Tibial artery (tissue), 4 donors: ENCODE measurements at regions of chr10 and their contacts with region 1.

Region 1: DNA sequence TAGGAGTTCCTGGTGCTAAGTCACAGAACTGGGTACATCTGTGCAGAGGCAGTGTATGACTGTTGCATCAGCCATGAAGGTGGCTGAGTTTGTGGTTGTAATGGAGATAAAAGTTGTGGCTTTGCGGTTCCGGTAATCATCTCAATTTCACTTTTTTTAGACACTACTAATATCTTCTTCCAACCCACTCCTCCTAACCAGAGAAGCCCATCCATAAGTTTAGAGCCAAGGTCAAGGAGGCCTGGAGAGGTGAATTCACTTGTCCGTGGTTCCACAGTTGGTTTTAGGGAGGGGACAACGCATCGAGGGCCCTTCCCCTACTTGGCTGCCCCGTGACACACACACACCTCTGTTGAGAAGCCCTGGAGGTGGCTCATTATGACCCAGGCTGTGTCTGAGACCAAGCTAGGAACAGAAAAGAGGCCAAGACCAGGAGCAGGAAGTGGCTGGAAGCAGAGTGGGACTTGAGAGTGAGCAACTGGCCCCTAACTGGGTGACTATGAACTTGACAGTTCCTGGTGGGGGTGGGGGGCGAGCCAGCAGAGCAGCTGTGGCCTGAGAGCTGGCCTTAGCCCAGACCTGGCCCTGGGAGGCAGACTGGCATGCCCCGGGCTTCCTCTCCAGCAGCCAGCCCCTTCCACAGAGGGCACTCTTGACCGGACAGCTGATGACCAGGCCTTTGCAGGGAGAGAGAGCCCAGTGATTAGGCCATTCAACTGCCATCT is 66.7 kb upstream of the COL13A1 start:
- DNase-seq: no peak
- H3K4me3 ChIP-seq: no peak overlapping the region
- H3K27ac ChIP-seq: peak overlapping the region; percentile 61 to 91
- H3K4me1 ChIP-seq: peaks cover 0 to 93% (median 80%) of the 10 kb centered on the region in 4 donors
- H3K27me3 ChIP-seq: no peaks in the 10 kb centered on the region
- CTCF ChIP-seq: no peak

Region 2: GRCh38 chr10:69800109-69800508 is 65.2 kb after region 1 on chr10:
- intact Hi-C with region 1: loop called (anchors 5 kb)
- DNase-seq: peak in 1 of 2 donors; percentile 74
- H3K4me3 ChIP-seq: no peak overlapping the region
- H3K27ac ChIP-seq: peak overlapping the region; percentile 25 to 79
- H3K4me1 ChIP-seq: peaks cover 0 to 34% (median 28%) of the 10 kb centered on the region in 4 donors
- H3K27me3 ChIP-seq: no peaks in the 10 kb centered on the region
- CTCF ChIP-seq: peak; percentile 62 to 67